ENCODE measurements at regions of chr3 and their contacts with region 1.

Region 1: DNA sequence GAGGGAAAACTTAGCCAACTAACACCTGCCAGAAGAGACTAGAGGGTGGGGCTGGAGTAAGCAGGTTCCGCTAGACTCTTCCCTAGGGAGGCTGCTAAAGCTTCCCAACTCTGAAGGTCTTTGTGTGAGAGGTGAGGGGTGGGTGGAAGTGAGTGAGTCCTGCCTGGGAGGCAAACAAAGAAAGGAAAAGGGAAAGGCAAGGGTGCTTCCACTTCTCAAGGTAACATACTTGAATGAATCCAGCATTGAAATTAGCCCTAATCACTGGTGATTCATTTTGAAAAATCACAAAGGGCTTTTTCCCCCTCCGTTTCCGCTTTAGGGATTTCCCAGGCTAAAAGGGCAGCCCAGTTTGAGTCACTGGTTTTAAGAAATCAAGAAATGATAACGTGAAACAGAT is 220.5 kb upstream of the ADAMTS9 start:
- DNase-seq: peak in 3 of 5 donors; percentile 52 to 66 (median 65)
- ATAC-seq: peak; percentile 85 to 96 (median 88)
- H3K4me3 ChIP-seq: no peak overlapping the region
- H3K27ac ChIP-seq: peak overlapping the region in 11 of 12 donors; percentile 16 to 81 (median 67)
- H3K4me1 ChIP-seq: peaks cover 4 to 61% (median 30%) of the 10 kb centered on the region in 12 donors
- H3K27me3 ChIP-seq: no peaks in the 10 kb centered on the region
- CTCF ChIP-seq: no peak
- POLR2A ChIP-seq: no peak

Region 2: DNA sequence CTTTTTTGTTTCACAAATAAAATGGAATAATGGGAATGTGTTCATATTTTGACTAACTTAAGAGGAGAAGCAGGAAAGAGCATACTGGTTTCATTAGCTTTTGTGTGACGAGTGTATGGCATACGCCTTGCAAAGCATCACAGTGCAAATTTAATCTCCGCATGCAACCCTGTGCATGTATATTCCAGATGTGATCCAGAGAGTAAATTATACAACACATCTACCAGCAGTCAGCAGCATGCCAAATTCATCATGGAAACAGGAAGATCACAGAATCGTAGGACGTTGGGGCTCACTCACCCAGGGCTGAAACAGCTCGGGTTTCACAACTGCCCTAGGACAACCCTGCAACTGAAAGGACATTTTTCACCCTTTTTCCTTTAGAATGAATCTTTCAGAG is 273.9 kb before region 1 on chr3:
- intact Hi-C with region 1: no loop called
- DNase-seq: peak in 1 of 5 donors; percentile 24
- ATAC-seq: peak in 1 of 4 donors; percentile 67
- H3K4me3 ChIP-seq: no peak overlapping the region
- H3K27ac ChIP-seq: peak overlapping the region in 4 of 12 donors; percentile 29 to 55 (median 38)
- H3K4me1 ChIP-seq: peaks cover 0 to 4% (median 0%) of the 10 kb centered on the region in 12 donors
- H3K27me3 ChIP-seq: no peaks in the 10 kb centered on the region
- CTCF ChIP-seq: no peak
- POLR2A ChIP-seq: no peak

Region 3: DNA sequence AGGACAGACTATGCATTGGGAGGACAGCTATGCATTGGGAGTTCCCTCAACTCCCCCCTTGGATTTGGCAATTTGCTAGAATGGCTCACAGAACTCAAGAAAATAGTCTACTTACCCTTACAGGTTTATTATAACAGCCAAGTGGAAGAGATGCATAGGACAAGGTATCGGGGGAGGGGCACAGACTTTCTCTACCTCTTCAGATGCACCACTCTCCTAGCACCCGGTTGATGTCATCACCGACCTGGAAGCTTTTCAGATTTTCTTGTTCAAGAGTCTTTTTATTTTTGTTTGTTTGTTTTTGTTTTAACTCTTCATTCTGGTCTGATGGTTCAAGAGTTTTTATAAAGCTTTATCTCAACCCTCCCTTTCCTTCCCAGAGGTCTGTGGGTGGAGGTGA is 199.8 kb before region 1 on chr3:
- intact Hi-C with region 1: no loop called
- DNase-seq: no peak
- ATAC-seq: no peak
- H3K4me3 ChIP-seq: no peak overlapping the region
- H3K27ac ChIP-seq: no peak overlapping the region
- H3K4me1 ChIP-seq: no peaks in the 10 kb centered on the region
- H3K27me3 ChIP-seq: no peaks in the 10 kb centered on the region
- CTCF ChIP-seq: no peak
- POLR2A ChIP-seq: no peak

Region 4: DNA sequence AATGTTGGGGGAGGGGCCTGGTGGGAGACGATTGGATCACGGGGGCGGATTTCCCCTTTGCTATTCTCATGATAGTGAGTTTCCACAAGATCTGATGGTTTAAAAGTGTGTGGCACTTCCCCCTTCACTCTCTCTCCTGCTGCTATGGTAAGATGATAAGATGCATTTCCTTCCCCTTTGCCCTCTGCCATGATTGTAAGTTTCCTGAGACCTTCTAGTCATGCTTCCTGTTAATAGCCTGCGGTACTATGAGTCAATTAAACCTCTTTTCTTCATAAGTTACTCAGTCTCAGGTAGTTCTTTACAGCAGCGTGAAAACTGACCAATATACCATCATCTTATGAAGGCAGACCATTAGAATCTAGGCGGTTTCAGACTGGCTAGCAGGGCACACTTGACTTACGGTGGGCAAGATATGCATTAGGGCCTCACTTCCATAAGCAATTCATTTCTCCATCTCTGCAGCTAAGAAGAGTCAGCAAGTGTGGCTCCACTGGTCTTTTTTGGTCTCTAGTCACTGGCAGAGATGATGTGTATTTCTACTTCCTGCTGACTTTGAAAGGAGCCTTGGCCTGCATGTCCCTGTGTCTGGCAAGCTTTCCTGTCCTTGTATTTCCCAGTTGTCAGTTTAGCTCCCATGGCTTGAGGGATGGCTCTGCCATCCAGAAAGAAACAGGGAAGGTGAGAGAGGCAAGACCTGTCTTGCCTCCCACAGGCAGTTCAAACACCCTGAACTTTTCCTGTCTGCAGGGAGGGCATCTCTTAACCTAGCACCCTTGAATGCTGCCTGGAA is 111.5 kb before region 1 on chr3:
- intact Hi-C with region 1: loop called in 1 of 10 experiments (anchors 10 kb)
- DNase-seq: no peak
- ATAC-seq: peak in 2 of 4 donors; percentile 25 to 32
- H3K4me3 ChIP-seq: no peak overlapping the region
- H3K27ac ChIP-seq: peak overlapping the region in 1 of 12 donors; percentile 24
- H3K4me1 ChIP-seq: peaks cover 0 to 28% (median 6%) of the 10 kb centered on the region in 12 donors
- H3K27me3 ChIP-seq: no peaks in the 10 kb centered on the region
- CTCF ChIP-seq: no peak
- POLR2A ChIP-seq: no peak

Measured in heart left ventricle (tissue), 16 donors.